ENCODE measurements at regions of chr1 and their contacts with region 1.

Region 1: DNA sequence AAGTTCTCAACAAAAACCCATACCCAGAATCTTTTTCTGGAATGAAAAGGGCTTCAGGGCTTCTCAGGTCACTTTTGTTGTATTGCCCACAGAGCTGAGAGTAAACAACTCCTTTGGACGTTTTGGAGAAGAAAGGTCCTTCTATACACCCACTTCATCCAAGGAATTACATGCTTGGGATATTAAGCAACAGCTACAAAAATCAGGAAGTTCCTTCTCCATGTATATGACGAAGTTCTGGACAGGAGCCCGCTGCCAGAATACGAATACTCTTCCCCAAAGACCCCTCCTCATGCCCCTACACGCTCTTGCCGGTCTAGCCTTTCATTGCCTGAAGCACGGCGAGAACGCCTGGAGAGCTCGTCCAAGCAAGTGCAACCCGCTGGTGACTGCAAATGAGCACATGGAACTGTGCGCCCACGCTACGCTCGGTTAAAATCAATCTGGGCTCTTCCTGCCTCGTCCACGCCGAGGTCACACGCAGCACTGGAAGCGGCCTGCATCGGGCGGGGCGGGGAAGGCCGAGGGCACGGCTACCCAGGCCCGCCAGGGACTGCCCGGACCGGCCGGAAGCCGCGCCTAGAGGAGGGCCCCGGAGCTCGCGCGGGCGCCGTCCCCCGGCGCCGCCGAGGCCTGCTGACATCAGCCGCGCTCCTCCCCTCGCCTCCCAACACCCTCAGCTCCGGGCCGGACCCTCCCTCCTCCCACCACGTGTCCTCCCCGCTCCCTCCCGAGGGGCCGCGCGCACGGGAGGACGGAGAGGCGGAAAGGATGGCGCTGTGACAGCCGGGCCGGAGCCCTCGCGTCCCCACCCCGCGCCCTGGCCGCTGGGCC is at the start of gene POGK:
- DNase-seq: peak; percentile 97
- H3K4me3 ChIP-seq: peak within 1 kb of the TSS; percentile 71 to 78
- H3K27ac ChIP-seq: peak within 1 kb of the TSS; percentile 52 to 91
- H3K4me1 ChIP-seq: peaks cover 9 to 23% of the 10 kb centered on the region in 2 experiments; a peak in 3 of 4 replicates
- H3K27me3 ChIP-seq: peaks cover 1% of the 10 kb centered on the region; the same call in 1 of the 2 replicates
- CTCF ChIP-seq: no peak
- EP300 ChIP-seq: peak in 1 of 2 experiments; percentile 8; a peak in 1 of 4 replicates
- RAD21 ChIP-seq: no peak
- polyA plus RNA-seq, gene POGK: 13.9 and 15.0 TPM in 2 replicates

Region 2: DNA sequence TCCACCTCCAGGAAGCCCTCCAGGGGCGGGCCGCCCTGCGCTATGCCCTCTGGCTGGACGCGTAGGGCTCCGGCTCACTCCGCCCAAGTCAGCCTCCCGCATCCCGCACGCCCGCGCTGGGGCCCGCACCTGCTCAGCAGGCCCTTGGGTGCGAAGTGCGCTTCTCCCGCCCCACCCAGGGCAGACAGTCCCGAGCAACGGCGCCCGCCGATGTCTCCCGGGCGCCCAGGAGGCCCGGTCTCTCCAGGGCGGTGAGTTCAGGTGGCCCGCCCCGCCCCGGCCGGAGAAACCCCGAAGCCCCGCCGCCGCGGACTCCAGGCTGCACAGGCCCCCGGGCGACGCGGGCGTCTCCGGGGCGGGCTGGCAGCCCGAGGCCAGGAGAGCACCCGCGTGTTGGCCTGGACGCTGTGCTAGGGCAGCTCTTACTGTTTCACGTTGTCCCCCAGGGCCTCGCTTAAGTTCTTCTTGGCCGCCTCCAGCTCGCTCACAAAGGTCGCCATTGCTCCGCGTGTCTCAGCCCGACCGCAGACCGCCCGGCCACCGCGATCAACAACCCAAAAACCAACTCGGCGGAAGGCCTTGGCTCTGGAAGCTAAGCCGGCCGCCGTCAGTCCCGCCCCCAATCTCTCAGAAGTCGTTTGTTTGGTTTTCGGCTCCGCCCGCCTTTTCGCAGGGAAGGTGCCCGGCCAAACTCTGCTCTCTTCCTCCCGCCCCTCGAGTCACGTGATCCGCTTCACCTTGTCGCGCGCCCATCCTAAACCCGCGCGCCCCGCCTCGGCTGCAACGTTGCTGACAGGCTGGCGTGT is 37.0 kb after region 1 on chr1 and contains the start of gene TADA1:
- CTCF ChIA-PET with region 1: no interaction called
- POLR2A ChIA-PET with region 1: interaction called, 16 read pairs
- DNase-seq: peak; percentile 95
- H3K4me3 ChIP-seq: peak within 1 kb of the TSS; percentile 70 to 78
- H3K27ac ChIP-seq: peak within 1 kb of the TSS; percentile 78 to 94
- H3K4me1 ChIP-seq: peaks cover 4 to 5% of the 10 kb centered on the region in 2 experiments; a peak in 3 of 4 replicates
- H3K27me3 ChIP-seq: no peaks in the 10 kb centered on the region
- CTCF ChIP-seq: no peak
- EP300 ChIP-seq: no peak; a peak in 1 of 4 replicates
- RAD21 ChIP-seq: no peak; the same call in 1 of the 2 replicates
- polyA plus RNA-seq, gene TADA1: 9.3 and 13.6 TPM in 2 replicates